ENCODE measurements at regions of chr5 and their contacts with region 1.

Region 1: DNA sequence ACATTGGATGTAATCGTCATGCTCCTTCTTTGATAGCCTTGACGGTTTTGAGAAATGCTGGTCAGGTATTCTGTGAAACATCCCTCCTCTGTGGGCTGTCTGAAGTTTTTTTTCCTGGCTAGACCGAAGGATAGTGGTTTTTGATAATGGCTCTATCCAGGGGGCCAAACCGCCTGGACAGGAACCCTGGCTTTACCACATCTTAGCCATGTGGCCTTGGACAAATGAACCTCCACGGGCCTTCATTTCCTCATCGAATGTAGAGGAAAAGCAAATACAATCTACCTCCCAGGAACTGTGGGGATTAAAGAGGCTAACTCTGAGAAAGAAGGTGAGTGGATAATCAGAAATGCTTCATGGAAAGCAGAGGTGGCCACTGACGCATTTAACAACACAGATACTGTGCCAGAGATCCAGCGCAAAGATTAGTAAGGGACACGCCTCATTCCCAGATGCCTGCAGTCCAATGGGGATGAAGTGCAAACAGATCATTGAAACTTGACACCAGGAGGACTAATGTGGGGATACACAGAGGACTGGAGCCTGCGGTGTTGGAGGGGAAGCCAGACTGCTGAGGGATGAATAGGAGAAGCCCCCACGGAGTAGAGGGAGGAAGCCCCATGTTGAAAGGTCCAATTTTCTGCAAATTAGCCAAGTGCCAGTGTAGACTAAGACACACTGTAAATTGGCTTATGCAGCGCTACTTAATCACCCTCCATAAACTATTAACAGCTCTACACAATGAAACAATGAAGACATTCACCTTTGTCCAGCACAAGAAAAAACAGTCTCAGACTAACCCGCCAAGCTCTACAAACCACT is 41.6 kb downstream of the MYO10 start:
- DNase-seq: peak; percentile 91 to 99
- H3K4me3 ChIP-seq: peak overlapping the region; percentile 41; the same call in 1 of the 2 replicates
- H3K27ac ChIP-seq: peak overlapping the region; percentile 92
- H3K4me1 ChIP-seq: peaks cover 88% of the 10 kb centered on the region
- H3K27me3 ChIP-seq: no peaks in the 10 kb centered on the region
- CTCF ChIP-seq: no peak

Region 2: DNA sequence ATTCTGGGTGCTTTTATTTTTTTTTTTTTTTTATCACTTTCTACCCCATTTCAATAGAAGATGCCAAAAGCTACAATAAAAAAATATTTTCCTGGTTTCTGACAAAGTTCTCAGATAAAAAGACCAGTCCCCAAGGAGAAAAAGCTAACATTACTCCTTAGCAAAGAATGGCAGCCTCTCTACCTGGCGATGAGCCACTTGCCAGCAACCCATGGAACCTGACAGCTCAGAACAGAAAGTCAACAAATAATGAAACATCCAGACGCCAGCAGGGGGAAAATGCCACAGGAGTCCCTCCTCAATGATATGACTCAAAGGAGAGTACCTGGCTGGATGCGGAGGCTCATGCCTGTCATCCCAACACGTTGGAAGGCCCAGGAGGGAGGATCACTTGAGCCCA is 81.5 kb before region 1 on chr5:
- CTCF ChIA-PET with region 1: interaction called, 11 read pairs
- POLR2A ChIA-PET with region 1: no interaction called
- intact Hi-C with region 1: loop called (anchors 1 kb)
- DNase-seq: peak; percentile 79 to 82
- H3K4me3 ChIP-seq: no peak overlapping the region
- H3K27ac ChIP-seq: no peak overlapping the region
- H3K4me1 ChIP-seq: peaks cover 43% of the 10 kb centered on the region
- H3K27me3 ChIP-seq: no peaks in the 10 kb centered on the region
- CTCF ChIP-seq: no peak; the same call in 1 of the 2 replicates

Region 3: DNA sequence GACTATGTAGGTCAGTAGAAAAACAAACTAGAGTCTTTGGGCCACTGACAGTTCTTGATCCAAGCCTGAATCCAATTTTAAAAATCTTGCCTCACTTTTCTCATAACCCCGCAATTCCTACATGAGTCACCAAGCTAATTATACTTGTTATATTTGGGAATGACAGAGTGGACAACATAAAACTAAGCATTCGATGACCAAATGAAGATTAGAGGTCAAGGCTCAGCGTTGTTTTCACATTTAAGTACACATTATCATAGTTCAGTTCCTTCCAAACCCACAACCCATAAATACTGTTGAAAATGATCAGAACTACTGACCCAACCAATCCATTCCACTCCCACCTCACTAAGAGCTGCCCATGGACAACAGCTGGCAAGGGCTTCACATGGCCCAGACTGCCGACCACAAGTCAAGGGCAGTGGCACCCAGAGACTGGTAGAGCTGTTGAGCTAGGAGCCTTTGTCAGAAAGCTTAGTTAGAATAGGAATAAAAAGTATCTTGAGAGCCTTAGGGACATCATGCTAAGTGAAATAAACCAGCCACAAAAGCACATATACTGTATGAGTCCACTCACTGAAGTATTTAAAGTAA is 22.6 kb before region 1 on chr5:
- CTCF ChIA-PET with region 1: interaction called, 4 read pairs
- POLR2A ChIA-PET with region 1: no interaction called
- intact Hi-C with region 1: loop called (anchors 1 kb)
- DNase-seq: no peak
- H3K4me3 ChIP-seq: no peak overlapping the region
- H3K27ac ChIP-seq: peak overlapping the region; percentile 77; the same call in 1 of the 2 replicates
- H3K4me1 ChIP-seq: peaks cover 28% of the 10 kb centered on the region
- H3K27me3 ChIP-seq: no peaks in the 10 kb centered on the region
- CTCF ChIP-seq: no peak

Region 4: DNA sequence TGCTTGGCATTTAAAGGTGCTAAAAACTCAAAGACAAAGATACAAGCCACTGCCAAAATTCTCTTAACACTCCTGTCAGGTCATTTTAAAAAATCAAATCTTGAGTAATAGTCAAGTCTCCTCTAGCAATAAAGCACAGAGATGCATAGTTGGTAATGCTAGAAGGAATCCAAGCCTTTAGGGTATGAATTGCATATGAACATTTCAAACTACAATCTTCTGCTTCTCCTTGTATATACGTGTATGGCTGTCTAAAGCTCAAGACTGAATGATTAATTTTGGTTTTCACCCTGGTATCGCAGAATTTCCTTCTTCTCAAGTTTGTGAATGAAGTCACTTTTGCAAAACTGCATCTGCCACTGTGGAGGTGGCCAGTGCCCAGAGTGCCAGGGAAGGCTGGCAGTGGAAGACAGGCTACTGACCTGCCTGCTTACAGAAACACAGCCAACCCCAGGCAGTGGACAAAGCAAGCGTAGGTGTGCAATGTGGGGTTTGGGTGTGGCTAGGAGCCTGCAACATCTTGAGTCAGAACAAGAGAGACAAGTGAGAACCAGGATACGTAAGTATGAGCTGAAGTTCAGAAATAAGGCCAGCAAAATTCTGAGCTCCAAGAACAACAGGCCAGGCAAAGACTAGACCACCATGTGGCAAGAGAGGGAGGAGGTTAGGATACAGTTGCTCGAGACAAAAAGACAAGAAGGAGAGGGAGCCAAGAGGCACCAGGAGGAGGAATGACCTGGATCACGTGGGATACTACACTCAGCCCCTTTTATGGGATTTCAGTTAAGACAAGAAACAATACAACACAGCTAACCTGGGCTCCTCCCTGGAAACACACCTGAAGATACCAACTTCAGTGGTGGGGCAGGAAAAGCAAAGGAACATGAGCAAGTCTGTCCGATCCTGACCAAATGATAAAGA is 19.0 kb after region 1 on chr5:
- CTCF ChIA-PET with region 1: interaction called, 13 read pairs
- POLR2A ChIA-PET with region 1: interaction called, 4 read pairs
- intact Hi-C with region 1: loop called (anchors 1 kb)
- DNase-seq: peak; percentile 83 to 92
- H3K4me3 ChIP-seq: peak overlapping the region; percentile 15; the same call in 1 of the 2 replicates
- H3K27ac ChIP-seq: peak overlapping the region; percentile 74
- H3K4me1 ChIP-seq: peaks cover 62% of the 10 kb centered on the region
- H3K27me3 ChIP-seq: no peaks in the 10 kb centered on the region
- CTCF ChIP-seq: no peak

Region 5: GRCh38 chr5:16952968-16953671 is 58.7 kb after region 1 on chr5:
- CTCF ChIA-PET with region 1: no interaction called
- POLR2A ChIA-PET with region 1: no interaction called
- intact Hi-C with region 1: no loop called
- DNase-seq: no peak
- H3K4me3 ChIP-seq: no peak overlapping the region
- H3K27ac ChIP-seq: no peak overlapping the region
- H3K4me1 ChIP-seq: no peaks in the 10 kb centered on the region
- H3K27me3 ChIP-seq: no peaks in the 10 kb centered on the region
- CTCF ChIP-seq: no peak

Region 6: GRCh38 chr5:16983022-16983639 is 88.7 kb after region 1 on chr5:
- CTCF ChIA-PET with region 1: no interaction called
- POLR2A ChIA-PET with region 1: no interaction called
- intact Hi-C with region 1: no loop called
- DNase-seq: peak in 1 of 2 experiments; percentile 66
- H3K4me3 ChIP-seq: no peak overlapping the region
- H3K27ac ChIP-seq: no peak overlapping the region
- H3K4me1 ChIP-seq: peaks cover 12% of the 10 kb centered on the region; the same call in 1 of the 2 replicates
- H3K27me3 ChIP-seq: no peaks in the 10 kb centered on the region
- CTCF ChIP-seq: no peak

Region 7: GRCh38 chr5:17012302-17012701 is 117.9 kb after region 1 on chr5:
- CTCF ChIA-PET with region 1: no interaction called
- POLR2A ChIA-PET with region 1: no interaction called
- intact Hi-C with region 1: loop called (anchors 5 kb)
- DNase-seq: peak; percentile 59 to 90
- H3K4me3 ChIP-seq: no peak overlapping the region
- H3K27ac ChIP-seq: peak overlapping the region; percentile 69
- H3K4me1 ChIP-seq: peaks cover 22% of the 10 kb centered on the region
- H3K27me3 ChIP-seq: no peaks in the 10 kb centered on the region
- CTCF ChIP-seq: no peak

Region 8: DNA sequence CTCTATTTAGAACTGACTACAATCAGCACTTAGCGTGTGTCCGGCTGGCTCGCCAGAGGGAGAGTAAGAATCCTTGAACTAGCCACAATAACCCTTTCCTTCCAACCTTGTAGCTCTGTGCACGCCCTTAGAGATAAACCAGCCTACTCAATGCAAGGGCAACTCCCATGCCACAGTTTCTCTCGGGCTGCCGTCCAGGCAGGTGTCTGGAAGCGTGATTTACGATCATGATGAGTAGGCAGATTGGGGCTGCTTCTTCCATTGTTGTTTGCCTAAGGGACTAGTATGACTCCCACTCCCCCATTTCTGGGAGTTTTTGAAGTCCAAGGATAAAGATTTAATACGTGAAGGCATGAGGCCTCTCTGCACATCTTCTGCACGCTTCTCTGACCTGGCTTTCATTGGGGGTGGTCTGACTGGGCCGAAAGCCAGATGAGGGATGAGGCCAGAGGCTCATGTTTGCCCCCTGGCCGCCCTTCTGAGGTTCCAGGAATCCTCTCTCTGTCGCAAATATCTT is 175.6 kb after region 1 on chr5:
- CTCF ChIA-PET with region 1: no interaction called
- POLR2A ChIA-PET with region 1: interaction called, 16 read pairs
- intact Hi-C with region 1: no loop called
- DNase-seq: peak; percentile 16 to 43
- H3K4me3 ChIP-seq: no peak overlapping the region
- H3K27ac ChIP-seq: no peak overlapping the region
- H3K4me1 ChIP-seq: no peaks in the 10 kb centered on the region
- H3K27me3 ChIP-seq: no peaks in the 10 kb centered on the region
- CTCF ChIP-seq: no peak

Measured in PC-9 (cell line).